GM10248 (cell line): ENCODE measurements at regions of chr10 and their contacts with region 1.

Region 1: GRCh38 chr10:24313283-24313682 is 104.3 kb downstream of the KIAA1217 start:
- DNase-seq: no peak
- CTCF ChIP-seq: no peak

Region 2: GRCh38 chr10:24299578-24300260 is 13.6 kb before region 1 on chr10:
- CTCF ChIA-PET with region 1: interaction called, 11 read pairs
- POLR2A ChIA-PET with region 1: no interaction called
- DNase-seq: no peak
- CTCF ChIP-seq: no peak